ENCODE measurements at regions of chrX and their contacts with region 1.

Region 1: DNA sequence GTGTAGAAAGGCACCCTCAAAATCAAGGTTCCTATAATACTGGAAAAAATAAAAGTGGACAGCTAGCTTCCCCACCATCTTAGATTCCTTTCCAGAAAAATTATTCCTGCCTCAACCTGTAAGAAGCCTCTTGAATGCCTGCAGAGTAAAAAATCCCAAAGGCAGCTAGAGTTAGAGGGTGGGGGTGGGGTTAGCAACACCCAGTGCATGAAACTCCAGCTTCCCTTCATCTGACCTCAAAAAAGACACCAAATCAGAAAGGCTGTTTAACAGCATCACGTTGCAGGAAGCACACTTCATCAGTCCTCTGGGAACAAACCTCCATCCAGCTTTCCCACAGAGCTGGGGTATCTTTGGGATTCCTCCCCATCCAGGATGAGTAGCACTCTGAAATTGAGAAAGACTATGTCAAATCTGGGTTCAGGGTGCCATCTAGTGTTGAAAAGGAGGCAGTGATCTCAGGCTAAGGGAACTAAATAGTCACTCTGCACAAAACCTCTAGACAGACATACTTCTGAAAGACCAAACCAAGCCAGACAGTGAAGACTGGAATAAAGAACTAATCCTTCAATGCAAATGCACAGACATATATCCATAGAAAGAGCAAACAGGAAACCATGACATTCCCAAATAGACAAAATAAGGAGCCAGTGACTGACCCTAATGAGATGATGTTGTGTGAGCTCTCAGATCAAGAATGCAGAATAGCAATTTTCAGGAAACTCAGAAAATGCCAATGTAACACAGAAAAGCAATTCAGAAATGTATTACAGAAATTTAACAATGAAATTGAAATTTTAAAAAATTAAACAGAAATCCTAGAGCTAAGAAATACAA is 97.9 kb downstream of the ARHGEF9 start:
- DNase-seq: peak; percentile 23
- ATAC-seq: peak; percentile 73
- H3K4me3 ChIP-seq: no peak overlapping the region
- H3K27ac ChIP-seq: no peak overlapping the region
- H3K4me1 ChIP-seq: no peaks in the 10 kb centered on the region
- H3K27me3 ChIP-seq: no peaks in the 10 kb centered on the region
- CTCF ChIP-seq: peak; percentile 72
- EP300 ChIP-seq: no peak
- POLR2A ChIP-seq: no peak
- RAD21 ChIP-seq: no peak

Region 2: GRCh38 chrX:63250253-63250868 is 436.7 kb before region 1 on chrX:
- CTCF ChIA-PET with region 1: interaction called, 11 read pairs
- POLR2A ChIA-PET with region 1: no interaction called
- in situ Hi-C with region 1: no loop called
- intact Hi-C with region 1: no loop called
- DNase-seq: peak; percentile 61
- ATAC-seq: peak; percentile 97
- H3K4me3 ChIP-seq: no peak overlapping the region
- H3K27ac ChIP-seq: no peak overlapping the region
- H3K4me1 ChIP-seq: no peaks in the 10 kb centered on the region
- H3K27me3 ChIP-seq: no peaks in the 10 kb centered on the region
- CTCF ChIP-seq: peak; percentile 73
- EP300 ChIP-seq: no peak
- POLR2A ChIP-seq: no peak
- RAD21 ChIP-seq: peak; percentile 44

Region 3: DNA sequence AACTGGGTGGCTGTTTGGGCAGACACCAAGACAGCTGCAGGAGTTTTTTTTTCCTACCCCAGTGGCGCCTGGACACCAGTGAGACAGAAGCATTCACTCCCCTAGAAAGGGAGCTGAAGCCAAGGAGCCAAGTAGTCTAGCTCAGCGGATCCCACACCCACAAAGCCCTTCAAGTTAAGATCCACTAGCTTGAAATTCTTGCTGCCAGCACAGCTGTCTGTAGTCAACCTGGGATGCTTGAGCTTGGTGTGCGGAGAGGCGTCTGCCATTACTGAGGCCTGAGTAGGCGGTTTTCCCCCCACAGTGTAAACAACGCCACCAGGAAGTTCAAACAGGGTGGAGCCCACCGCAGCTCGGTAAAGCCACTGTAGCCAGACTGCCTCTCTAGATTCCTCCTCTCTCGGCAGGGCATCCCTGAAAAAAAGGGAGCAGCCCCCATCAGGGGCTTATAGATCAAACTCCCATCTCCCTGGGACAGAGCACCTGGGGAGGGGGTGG is 73.5 kb before region 1 on chrX:
- CTCF ChIA-PET with region 1: no interaction called
- POLR2A ChIA-PET with region 1: no interaction called
- in situ Hi-C with region 1: no loop called
- intact Hi-C with region 1: loop called (anchors 10 kb)
- DNase-seq: peak; percentile 7
- ATAC-seq: peak; percentile 79
- H3K4me3 ChIP-seq: peak overlapping the region in 2 of 3 experiments; percentile 26 to 28; a peak in 3 of 6 replicates
- H3K27ac ChIP-seq: no peak overlapping the region
- H3K4me1 ChIP-seq: no peaks in the 10 kb centered on the region; the same call in 1 of the 2 replicates
- H3K27me3 ChIP-seq: no peaks in the 10 kb centered on the region
- CTCF ChIP-seq: no peak
- EP300 ChIP-seq: no peak
- POLR2A ChIP-seq: no peak
- RAD21 ChIP-seq: no peak

Region 4: DNA sequence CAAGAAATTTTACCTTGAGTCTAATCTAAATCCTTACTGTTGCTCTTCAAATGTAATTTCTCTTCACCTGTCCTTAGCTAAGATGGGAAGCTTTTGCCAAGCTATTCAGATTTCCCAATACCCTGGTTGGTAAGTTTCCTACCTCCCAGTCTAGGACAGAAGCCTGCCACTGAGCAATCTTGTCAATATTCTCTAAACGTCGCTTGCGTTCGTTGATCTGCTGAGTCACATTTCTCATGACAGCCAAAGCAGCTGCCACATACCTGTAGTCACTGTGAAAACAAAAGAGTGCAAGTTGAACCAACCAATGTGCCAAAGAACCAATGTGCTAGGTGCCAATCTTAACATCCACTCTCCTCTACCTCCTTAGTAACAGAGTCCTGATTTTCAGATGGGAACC is 13.2 kb before region 1 on chrX:
- CTCF ChIA-PET with region 1: no interaction called
- POLR2A ChIA-PET with region 1: no interaction called
- in situ Hi-C with region 1: no loop called
- intact Hi-C with region 1: no loop called
- DNase-seq: no peak
- ATAC-seq: no peak
- H3K4me3 ChIP-seq: no peak overlapping the region
- H3K27ac ChIP-seq: no peak overlapping the region
- H3K4me1 ChIP-seq: no peaks in the 10 kb centered on the region
- H3K27me3 ChIP-seq: no peaks in the 10 kb centered on the region
- CTCF ChIP-seq: no peak
- EP300 ChIP-seq: no peak
- POLR2A ChIP-seq: no peak
- RAD21 ChIP-seq: no peak

Region 5: DNA sequence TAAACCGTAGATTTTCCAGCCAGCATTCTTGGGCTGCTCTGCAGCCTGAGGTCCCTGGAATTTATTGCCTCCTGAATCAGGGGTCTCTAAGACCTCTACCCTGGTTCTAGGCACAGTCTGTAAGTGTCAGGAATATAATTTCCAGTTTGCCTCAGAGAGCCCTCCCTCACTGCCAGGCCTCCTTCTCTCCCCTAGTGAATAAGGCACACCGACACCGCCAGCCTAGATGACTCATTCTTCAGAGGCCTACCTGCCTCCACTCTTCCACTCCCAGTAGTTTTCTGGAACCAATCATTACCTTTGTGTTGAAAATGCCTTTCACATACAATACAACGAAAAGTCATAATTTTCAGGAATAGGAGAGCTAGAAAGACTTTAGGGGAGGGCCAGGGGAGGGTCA is 148.3 kb after region 1 on chrX:
- CTCF ChIA-PET with region 1: no interaction called
- POLR2A ChIA-PET with region 1: no interaction called
- in situ Hi-C with region 1: no loop called
- intact Hi-C with region 1: no loop called
- DNase-seq: no peak
- ATAC-seq: no peak
- H3K4me3 ChIP-seq: no peak overlapping the region
- H3K27ac ChIP-seq: no peak overlapping the region
- H3K4me1 ChIP-seq: no peaks in the 10 kb centered on the region
- H3K27me3 ChIP-seq: no peaks in the 10 kb centered on the region
- CTCF ChIP-seq: no peak
- EP300 ChIP-seq: no peak
- POLR2A ChIP-seq: no peak
- RAD21 ChIP-seq: no peak

Measured in HepG2 (cell line).